Right cardiac atrium (tissue), 5 donors: ENCODE measurements at regions of chr7 and their contacts with region 1.

Region 1: DNA sequence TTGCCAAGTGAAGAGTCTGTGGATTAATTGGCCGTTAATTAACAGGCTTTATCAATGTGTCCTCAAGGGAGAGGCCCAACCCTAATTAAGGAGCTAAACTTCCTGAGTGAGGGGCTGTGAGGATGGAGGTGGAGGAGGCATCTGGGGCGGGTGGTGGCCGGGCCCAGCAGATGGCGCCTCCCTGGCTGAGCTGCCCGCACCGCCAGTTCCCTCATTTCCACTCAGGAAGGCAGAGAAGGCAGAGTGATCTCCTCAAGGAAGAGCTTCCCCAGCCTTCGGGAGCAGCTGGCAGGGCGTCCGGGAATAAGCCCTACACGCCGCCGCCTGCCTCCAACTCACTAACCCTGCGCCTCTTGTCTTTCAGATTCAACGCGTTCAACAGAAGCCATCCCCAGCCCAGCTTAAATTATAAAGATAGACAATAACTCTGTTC is 112.2 kb downstream of the CYTH3 start:
- DNase-seq: peak; percentile 82 to 91 (median 88)
- ATAC-seq: peak; percentile 68 to 71
- H3K4me3 ChIP-seq: no peak overlapping the region
- H3K27ac ChIP-seq: no peak overlapping the region
- H3K4me1 ChIP-seq: peaks cover 4% of the 10 kb centered on the region
- H3K27me3 ChIP-seq: no peaks in the 10 kb centered on the region

Region 2: DNA sequence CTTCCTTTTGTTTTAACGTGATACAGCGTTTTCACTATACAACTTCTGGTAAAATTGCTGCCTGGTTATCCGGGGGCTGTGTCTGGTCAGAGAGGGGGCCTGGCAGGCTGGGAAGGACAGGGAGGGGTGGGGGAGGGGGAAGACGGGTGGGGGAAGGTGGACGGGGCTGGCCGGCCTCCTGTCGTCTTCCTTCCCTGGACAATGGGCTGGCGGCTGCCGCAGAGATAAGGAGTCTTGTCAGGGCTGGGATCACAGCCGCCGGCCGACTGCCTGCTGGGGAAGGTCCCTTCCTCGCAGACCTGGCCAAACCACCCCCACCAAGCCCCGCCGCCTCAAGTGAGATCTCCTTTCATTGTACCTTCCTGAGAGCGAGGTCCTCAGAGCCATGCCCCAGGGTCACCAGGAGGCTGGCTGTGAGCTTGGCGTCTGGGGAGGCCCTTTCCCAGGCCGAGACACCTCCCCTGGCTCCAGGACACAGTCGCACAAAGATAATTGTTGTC is 585.4 kb before region 1 on chr7:
- intact Hi-C with region 1: no loop called
- DNase-seq: peak; percentile 79 to 91 (median 88)
- ATAC-seq: peak; percentile 70 to 85
- H3K4me3 ChIP-seq: peak overlapping the region; percentile 1
- H3K27ac ChIP-seq: no peak overlapping the region
- H3K4me1 ChIP-seq: peaks cover 2% of the 10 kb centered on the region
- H3K27me3 ChIP-seq: no peaks in the 10 kb centered on the region

Region 3: DNA sequence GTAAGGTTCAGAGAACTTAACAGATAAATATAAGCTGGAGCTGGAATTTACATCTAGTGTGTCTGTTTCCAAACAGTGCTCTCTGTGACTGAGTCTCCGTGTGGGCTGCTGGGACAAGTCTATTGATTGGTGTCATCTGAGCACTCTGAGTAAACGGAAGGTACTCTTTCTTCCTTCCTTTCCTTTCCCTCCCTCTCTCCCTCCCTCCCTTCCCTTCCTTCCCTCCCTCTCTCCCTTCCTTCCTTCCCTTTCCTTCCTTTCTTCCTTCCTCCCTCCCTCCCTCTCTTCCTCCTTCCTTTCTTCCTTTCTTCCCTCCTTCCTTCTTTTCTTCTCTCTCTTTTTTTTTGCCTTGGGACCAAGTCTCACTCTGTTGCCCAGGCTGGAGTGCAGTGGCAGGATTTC is 67.3 kb before region 1 on chr7:
- intact Hi-C with region 1: no loop called
- DNase-seq: no peak
- ATAC-seq: no peak
- H3K4me3 ChIP-seq: no peak overlapping the region
- H3K27ac ChIP-seq: no peak overlapping the region
- H3K4me1 ChIP-seq: no peaks in the 10 kb centered on the region
- H3K27me3 ChIP-seq: no peaks in the 10 kb centered on the region

Region 4: DNA sequence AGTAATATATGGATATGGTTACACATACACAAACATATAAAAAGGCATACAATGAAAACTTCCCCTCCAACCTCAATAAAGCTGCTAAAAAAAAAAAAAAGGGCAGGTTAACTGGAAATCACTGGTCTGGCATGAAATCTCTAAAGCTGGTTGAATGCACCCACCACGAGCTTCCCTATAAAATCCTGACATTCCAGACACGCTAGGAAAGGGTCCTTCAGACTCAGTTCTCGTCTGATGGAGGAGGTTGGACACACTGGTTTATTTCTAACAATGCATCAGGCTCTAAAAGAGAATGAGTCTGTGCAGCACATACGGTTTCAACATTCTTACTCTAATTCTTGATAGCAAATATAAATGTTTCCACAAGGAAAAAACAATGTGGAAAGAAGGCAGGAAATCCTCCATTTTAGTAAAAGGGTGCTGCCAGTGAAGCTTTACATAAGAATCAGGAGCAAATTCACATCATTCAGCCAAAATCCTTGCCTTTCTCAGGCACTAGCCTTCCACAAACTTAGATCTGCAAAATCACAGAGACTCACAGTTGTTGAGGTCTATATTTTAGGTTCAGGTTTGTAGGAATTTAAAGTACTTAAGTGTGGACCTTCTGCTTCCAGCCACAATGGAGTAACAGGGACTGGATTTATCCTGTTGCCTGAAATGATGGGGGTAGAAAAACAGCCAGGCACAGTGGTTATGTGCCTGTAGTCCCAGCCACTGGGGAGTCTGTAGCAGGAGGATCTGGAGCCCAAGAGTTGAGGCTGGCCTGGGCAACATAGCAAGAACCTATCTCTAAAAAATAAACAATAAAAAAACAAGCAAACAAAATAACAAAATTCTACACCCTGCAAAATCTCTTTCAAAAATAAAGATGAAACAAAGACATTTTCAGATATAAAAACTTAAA is 38.7 kb after region 1 on chr7:
- intact Hi-C with region 1: no loop called
- DNase-seq: no peak
- ATAC-seq: no peak
- H3K4me3 ChIP-seq: no peak overlapping the region
- H3K27ac ChIP-seq: no peak overlapping the region
- H3K4me1 ChIP-seq: peaks cover 8% of the 10 kb centered on the region
- H3K27me3 ChIP-seq: no peaks in the 10 kb centered on the region

Region 5: GRCh38 chr7:6228361-6229229 is 68.4 kb after region 1 on chr7:
- intact Hi-C with region 1: loop called in 1 of 4 experiments (anchors 10 kb)
- DNase-seq: peak in 2 of 3 donors; percentile 34 to 40
- ATAC-seq: peak; percentile 68 to 83
- H3K4me3 ChIP-seq: peak overlapping the region; percentile 13
- H3K27ac ChIP-seq: peak overlapping the region; percentile 78
- H3K4me1 ChIP-seq: peaks cover 22% of the 10 kb centered on the region
- H3K27me3 ChIP-seq: no peaks in the 10 kb centered on the region

Region 6: GRCh38 chr7:6260291-6261187 is 100.3 kb after region 1 on chr7:
- intact Hi-C with region 1: loop called in 1 of 4 experiments (anchors 5 kb)
- DNase-seq: no peak
- ATAC-seq: peak; percentile 38 to 42
- H3K4me3 ChIP-seq: no peak overlapping the region
- H3K27ac ChIP-seq: peak overlapping the region; percentile 70
- H3K4me1 ChIP-seq: peaks cover 32% of the 10 kb centered on the region
- H3K27me3 ChIP-seq: no peaks in the 10 kb centered on the region

Region 7: DNA sequence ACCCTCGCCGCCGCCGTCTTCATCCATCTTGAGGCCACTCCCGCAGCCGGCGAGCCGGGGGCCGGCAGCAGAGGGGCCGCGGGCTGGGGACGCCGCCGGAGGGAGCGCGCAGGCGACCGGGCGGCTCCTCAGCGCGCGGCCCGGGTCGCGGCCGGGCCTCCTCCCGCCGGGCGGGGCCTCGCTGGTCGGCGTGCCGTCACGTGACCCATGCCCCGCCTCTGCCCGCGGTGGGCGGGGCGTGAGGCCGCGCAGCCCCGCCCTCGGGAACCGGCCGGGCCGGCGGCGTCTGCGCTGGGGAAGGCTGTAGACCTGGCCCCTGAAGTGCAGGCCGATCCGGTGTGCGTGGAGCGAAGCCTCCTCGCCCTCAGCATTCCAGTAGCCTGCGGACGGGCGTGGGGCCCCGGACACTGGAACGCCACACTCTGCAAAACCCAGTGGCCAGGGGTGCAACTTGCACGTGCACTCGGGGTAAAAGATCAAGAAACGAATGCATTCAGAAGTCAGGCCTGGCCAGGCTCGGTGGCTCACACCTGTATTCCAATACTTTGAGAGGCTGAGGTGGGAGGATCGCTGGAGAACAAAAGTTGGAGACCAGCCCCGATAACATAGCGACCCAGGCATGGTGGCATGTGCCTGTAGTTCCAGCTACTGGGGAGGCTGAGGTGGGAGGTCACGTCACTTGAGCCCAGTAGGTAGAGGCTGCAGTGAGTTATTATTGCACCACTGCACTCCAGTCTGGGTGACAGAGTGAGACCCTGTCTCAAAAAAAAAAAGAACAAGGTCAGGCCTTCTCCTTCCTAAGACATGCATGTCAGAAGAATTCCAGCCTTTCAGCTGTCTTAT is 112.5 kb after region 1 on chr7 and contains the start of gene CYTH3:
- intact Hi-C with region 1: loop called in 3 of 4 experiments (anchors 5 to 10 kb)
- DNase-seq: peak; percentile 81 to 93 (median 91)
- ATAC-seq: peak; percentile 93 to 95
- H3K4me3 ChIP-seq: peak within 1 kb of the TSS; percentile 96
- H3K27ac ChIP-seq: peak within 1 kb of the TSS; percentile 8
- H3K4me1 ChIP-seq: peaks cover 9% of the 10 kb centered on the region
- H3K27me3 ChIP-seq: no peaks in the 10 kb centered on the region
- total RNA-seq, gene CYTH3: 27.2 to 40.2 (median 32.0) TPM

Region 8: DNA sequence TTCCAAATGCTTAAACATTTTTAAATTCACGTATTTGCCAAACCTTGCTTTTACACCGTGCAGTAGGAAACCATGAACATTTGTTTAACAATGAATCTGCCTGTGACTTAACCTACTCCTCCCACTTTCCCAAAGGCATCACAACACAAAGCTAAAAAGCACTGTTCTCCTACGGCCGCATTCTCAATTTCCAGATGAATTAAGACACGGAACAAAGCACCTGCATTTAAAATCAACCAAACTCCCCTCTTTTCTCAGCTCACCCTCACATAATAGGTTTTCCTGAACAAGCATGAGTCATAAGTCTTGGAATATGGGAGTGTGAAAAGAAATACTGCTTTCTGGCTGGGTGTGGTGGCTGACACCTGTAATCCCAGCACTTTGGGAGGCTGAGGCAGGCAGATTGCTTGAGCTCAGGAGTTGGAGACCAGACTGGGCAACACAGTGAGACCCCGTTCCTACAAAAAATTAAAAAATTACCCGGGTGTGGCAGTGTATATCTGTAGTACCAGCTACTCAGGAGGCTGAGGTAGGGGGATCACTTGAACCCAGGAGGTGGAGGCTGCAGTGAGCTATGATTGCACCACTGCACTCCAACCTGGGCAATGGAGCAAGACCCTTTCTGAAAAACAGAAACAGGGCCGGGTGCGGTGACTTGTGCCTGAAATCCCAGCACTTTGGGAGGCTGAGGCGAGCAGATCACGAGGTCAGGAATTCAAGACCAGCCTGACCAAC is 163.9 kb after region 1 on chr7:
- intact Hi-C with region 1: loop called (anchors 2 to 5 kb)
- DNase-seq: no peak
- ATAC-seq: no peak
- H3K4me3 ChIP-seq: no peak overlapping the region
- H3K27ac ChIP-seq: no peak overlapping the region
- H3K4me1 ChIP-seq: no peaks in the 10 kb centered on the region
- H3K27me3 ChIP-seq: no peaks in the 10 kb centered on the region